GM13976 (cell line): ENCODE measurements at regions of chr9 and their contacts with region 1.

Region 1: DNA sequence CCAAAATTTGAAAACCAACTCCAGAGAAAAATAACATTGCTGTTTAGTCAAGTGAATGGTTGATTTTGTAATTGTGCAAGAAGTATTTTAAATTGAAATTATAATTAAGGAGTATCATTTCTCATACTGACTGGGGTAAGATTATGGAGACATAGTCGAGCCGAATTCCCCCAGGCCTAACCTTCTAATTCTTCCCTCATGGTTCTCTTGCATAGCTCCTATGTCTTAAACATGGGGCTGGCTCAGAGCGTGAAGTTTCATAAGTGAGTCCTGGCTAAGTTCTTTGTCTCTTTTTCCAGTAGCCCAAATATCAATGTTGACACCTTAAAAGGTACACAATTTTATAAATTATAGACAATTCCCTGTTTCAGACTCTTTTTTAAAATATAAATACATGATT is 46.7 kb upstream of the ANXA1 start:
- DNase-seq: no peak
- CTCF ChIP-seq: no peak

Region 2: GRCh38 chr9:72882117-72882775 is 222.7 kb before region 1 on chr9:
- in situ Hi-C with region 1: no loop called
- DNase-seq: no peak
- CTCF ChIP-seq: no peak

Region 3: GRCh38 chr9:73179589-73179988 is 74.7 kb after region 1 on chr9:
- in situ Hi-C with region 1: loop called (anchors 5 kb)
- DNase-seq: peak; percentile 1
- CTCF ChIP-seq: no peak

Region 4: DNA sequence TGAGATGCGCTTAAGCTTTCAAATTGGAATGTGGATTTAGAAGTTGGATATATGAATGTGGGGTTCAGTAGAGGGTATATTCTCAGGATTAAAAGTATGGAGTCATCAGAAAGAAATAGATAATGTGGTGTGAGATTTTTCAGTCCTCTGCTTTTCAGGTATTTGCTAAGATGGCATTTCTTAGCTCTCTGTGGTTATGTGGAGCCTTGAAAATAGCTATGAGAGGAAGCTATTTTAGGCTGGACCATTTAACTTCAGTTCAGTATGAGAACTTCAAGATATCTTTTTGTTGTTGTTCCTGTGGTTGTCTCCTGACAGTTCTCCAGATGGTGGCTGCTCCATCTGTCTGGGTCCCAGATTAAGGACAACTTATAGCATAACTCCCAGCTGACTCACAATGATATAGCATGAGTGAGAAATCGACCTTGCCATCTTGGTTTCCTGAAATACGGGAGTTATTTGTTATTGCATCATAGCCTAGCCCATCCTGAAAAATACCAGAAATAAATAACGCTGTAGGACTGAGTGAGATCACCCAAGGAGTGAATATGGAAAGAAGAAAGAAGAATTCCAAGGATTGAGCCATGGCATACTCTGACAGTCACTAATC is 508.3 kb after region 1 on chr9:
- in situ Hi-C with region 1: no loop called
- DNase-seq: no peak
- CTCF ChIP-seq: no peak